ENCODE measurements at regions of chr4 and their contacts with region 1.

Region 1: GRCh38 chr4:101347557-101348366 is 436 bp upstream of the PPP3CA start:
- DNase-seq: peak; percentile 97 to 99 (median 98)
- H3K4me3 ChIP-seq: peak overlapping the region; percentile 96 to 99
- H3K4me3 Mint-ChIP-seq: peak overlapping the region; percentile 93 to 99 (median 97)
- H3K27ac ChIP-seq: peak overlapping the region; percentile 81
- H3K27ac Mint-ChIP-seq: peak overlapping the region; percentile 95 to 98 (median 96)
- H3K4me1 ChIP-seq: peaks cover 33% of the 10 kb centered on the region
- H3K4me1 Mint-ChIP-seq: peaks cover 24 to 39% (median 34%) of the 10 kb centered on the region in 4 donors
- H3K27me3 ChIP-seq: no peaks in the 10 kb centered on the region
- H3K27me3 Mint-ChIP-seq: peaks cover 0 to 5% of the 10 kb centered on the region in 2 donors

Region 2: GRCh38 chr4:100679926-100680325 is 667.8 kb before region 1 on chr4:
- CTCF ChIA-PET with region 1: no interaction called
- POLR2A ChIA-PET with region 1: no interaction called
- intact Hi-C with region 1: no loop called
- DNase-seq: no peak
- H3K4me3 ChIP-seq: no peak overlapping the region
- H3K4me3 Mint-ChIP-seq: no peak overlapping the region
- H3K27ac ChIP-seq: no peak overlapping the region
- H3K27ac Mint-ChIP-seq: no peak overlapping the region
- H3K4me1 ChIP-seq: no peaks in the 10 kb centered on the region
- H3K4me1 Mint-ChIP-seq: no peaks in the 10 kb centered on the region
- H3K27me3 ChIP-seq: no peaks in the 10 kb centered on the region
- H3K27me3 Mint-ChIP-seq: peaks cover 0 to 8% of the 10 kb centered on the region in 2 donors

Region 3: GRCh38 chr4:100736641-100737451 is 610.9 kb before region 1 on chr4:
- CTCF ChIA-PET with region 1: no interaction called
- POLR2A ChIA-PET with region 1: no interaction called
- intact Hi-C with region 1: no loop called
- DNase-seq: no peak
- H3K4me3 ChIP-seq: no peak overlapping the region
- H3K4me3 Mint-ChIP-seq: no peak overlapping the region
- H3K27ac ChIP-seq: no peak overlapping the region
- H3K27ac Mint-ChIP-seq: no peak overlapping the region
- H3K4me1 ChIP-seq: no peaks in the 10 kb centered on the region
- H3K4me1 Mint-ChIP-seq: peaks cover 0 to 1% (median 0%) of the 10 kb centered on the region in 4 donors
- H3K27me3 ChIP-seq: no peaks in the 10 kb centered on the region
- H3K27me3 Mint-ChIP-seq: peaks cover 2 to 3% of the 10 kb centered on the region in 2 donors

Region 4: DNA sequence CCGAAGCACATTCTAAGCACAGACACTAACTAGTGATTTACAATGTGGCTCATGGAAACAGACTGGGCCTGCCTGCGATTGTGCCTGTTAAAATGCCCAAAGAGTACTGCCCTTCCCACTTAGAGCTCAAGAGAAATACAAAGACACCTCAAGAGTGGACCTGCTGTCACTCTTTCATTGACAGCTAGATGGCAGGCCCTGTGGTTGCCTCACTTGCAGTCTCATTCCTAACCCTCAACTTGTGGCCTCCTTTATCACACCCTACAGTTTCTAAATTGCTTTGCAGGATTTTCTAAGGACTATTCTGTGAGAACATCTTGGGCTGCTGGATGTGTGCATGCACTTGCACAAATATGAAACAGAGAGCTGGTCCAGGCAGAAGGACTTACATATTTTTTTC is 498.9 kb before region 1 on chr4:
- CTCF ChIA-PET with region 1: interaction called, 3 read pairs
- POLR2A ChIA-PET with region 1: no interaction called
- intact Hi-C with region 1: loop called (anchors 5 kb)
- DNase-seq: peak in 4 of 5 donors; percentile 2 to 5 (median 4)
- H3K4me3 ChIP-seq: no peak overlapping the region
- H3K4me3 Mint-ChIP-seq: no peak overlapping the region
- H3K27ac ChIP-seq: no peak overlapping the region
- H3K27ac Mint-ChIP-seq: no peak overlapping the region
- H3K4me1 ChIP-seq: no peaks in the 10 kb centered on the region
- H3K4me1 Mint-ChIP-seq: peaks cover 0 to 2% (median 0%) of the 10 kb centered on the region in 4 donors
- H3K27me3 ChIP-seq: no peaks in the 10 kb centered on the region
- H3K27me3 Mint-ChIP-seq: no peaks in the 10 kb centered on the region

Region 5: GRCh38 chr4:101259876-101260275 is 87.9 kb before region 1 on chr4:
- CTCF ChIA-PET with region 1: no interaction called
- POLR2A ChIA-PET with region 1: interaction called, 3 read pairs
- intact Hi-C with region 1: loop called (anchors 5 kb)
- DNase-seq: no peak
- H3K4me3 ChIP-seq: no peak overlapping the region
- H3K4me3 Mint-ChIP-seq: no peak overlapping the region
- H3K27ac ChIP-seq: no peak overlapping the region
- H3K27ac Mint-ChIP-seq: no peak overlapping the region
- H3K4me1 ChIP-seq: peaks cover 31% of the 10 kb centered on the region
- H3K4me1 Mint-ChIP-seq: peaks cover 38 to 69% (median 57%) of the 10 kb centered on the region in 4 donors
- H3K27me3 ChIP-seq: no peaks in the 10 kb centered on the region
- H3K27me3 Mint-ChIP-seq: no peaks in the 10 kb centered on the region

Region 6: DNA sequence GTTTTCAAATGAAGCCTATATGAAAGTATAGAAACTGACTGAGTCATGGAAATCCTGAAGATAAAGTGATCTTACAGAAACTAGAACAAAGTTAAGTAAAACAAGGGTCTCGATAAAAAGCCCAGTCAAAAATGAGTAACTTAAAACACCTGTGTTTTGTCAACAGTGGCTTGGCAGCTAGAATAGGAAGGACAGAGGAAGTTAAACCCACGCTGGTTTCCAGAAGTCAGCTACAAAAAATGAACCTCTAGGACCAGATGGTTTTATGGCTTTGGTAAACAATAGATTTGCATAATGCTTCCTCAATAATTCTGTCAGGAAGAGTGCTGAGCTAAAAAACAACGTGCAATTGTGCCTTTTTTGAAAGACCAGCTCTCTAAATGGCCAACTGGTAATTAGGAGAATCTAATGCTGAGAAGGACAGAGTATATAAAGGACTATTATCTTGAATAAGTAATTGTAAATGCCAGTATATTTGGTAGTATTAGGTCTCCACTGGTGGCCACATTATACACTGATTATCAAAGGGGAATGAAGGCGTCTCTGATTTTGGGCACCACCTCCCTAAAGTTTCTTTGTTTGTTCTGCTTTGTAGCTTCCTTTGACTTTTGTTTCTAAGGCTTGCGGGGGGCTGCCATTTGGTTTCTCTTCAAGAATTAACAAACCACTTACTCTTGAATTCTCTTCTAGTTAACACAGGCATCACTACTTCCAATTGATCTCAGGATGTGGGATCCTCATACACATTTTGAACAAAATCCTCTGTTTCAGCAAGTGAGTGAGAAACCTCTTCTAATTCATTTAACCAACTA is 71.8 kb after region 1 on chr4:
- CTCF ChIA-PET with region 1: interaction called, 9 read pairs
- POLR2A ChIA-PET with region 1: interaction called, 25 read pairs
- intact Hi-C with region 1: loop called (anchors 1 kb)
- DNase-seq: no peak
- H3K4me3 ChIP-seq: no peak overlapping the region
- H3K4me3 Mint-ChIP-seq: peak overlapping the region in 2 of 8 donors; percentile 25 to 53
- H3K27ac ChIP-seq: no peak overlapping the region
- H3K27ac Mint-ChIP-seq: no peak overlapping the region
- H3K4me1 ChIP-seq: peaks cover 38% of the 10 kb centered on the region
- H3K4me1 Mint-ChIP-seq: peaks cover 29 to 42% (median 35%) of the 10 kb centered on the region in 4 donors
- H3K27me3 ChIP-seq: no peaks in the 10 kb centered on the region
- H3K27me3 Mint-ChIP-seq: peaks cover 14 to 21% of the 10 kb centered on the region in 2 donors

Region 7: GRCh38 chr4:102760645-102761295 is 1413.0 kb after region 1 on chr4 and contains the start of gene MANBA:
- CTCF ChIA-PET with region 1: no interaction called
- POLR2A ChIA-PET with region 1: no interaction called
- intact Hi-C with region 1: loop called (anchors 5 kb)
- DNase-seq: peak; percentile 78 to 84 (median 79)
- H3K4me3 ChIP-seq: peak within 1 kb of the TSS; percentile 77 to 89
- H3K4me3 Mint-ChIP-seq: peak within 1 kb of the TSS; percentile 92 to 99 (median 98)
- H3K27ac ChIP-seq: peak within 1 kb of the TSS; percentile 65
- H3K27ac Mint-ChIP-seq: peak within 1 kb of the TSS; percentile 75 to 96 (median 94)
- H3K4me1 ChIP-seq: peaks cover 18% of the 10 kb centered on the region
- H3K4me1 Mint-ChIP-seq: peaks cover 24 to 47% (median 36%) of the 10 kb centered on the region in 4 donors
- H3K27me3 ChIP-seq: no peaks in the 10 kb centered on the region
- H3K27me3 Mint-ChIP-seq: peaks cover 0 to 3% of the 10 kb centered on the region in 2 donors
- total RNA-seq, gene MANBA: 30.0 to 33.2 TPM

Measured in CD4-positive, alpha-beta memory T cell (primary cell).